ENCODE measurements at regions of chr3 and their contacts with region 1.

Region 1: DNA sequence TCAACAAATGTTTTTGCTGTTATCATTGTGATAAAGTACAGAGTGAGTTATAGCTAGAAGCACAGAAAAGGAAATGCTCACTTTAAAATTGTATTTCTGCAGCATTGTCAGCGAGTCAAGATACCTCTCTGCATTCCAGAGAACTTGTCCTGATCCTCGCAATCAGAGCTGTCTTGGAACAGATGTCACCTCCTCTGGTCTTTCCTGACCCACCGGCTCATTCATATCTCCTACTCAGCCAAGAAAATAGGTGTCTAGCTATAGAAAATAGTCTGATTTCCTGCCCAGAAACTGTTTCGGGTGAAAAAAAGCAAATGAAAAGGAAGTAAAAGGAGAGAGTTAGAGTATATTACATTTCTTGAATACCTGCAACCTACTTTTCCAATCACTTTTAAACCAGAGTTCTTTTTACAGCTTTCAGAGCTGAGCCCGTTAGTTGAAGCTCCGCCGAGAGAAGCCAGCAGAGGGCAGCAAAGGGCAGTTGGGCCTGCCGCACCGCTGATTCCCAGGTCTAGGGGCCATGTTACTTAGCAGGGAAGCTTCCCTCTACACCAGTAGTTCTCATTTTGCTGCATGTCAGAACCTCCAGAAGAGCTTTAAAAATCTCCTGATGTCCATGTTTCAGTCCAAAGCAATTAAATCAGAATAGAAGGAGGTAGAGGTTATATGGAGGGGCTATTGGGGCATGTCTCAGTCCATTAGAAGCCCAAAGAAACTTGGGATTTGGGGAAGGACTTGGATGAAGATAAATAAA is 185.7 kb upstream of the THRB start:
- DNase-seq: peak; percentile 10 to 44 (median 34)
- H3K4me3 ChIP-seq: no peak overlapping the region
- H3K4me3 Mint-ChIP-seq: no peak overlapping the region
- H3K27ac ChIP-seq: no peak overlapping the region
- H3K27ac Mint-ChIP-seq: peak overlapping the region in 1 of 7 donors; percentile 7
- H3K4me1 ChIP-seq: peaks cover 11% of the 10 kb centered on the region in 2 donors
- H3K4me1 Mint-ChIP-seq: peaks cover 20% of the 10 kb centered on the region
- H3K27me3 ChIP-seq: peaks cover 2 to 4% of the 10 kb centered on the region in 2 donors
- H3K27me3 Mint-ChIP-seq: peaks cover 6 to 24% (median 12%) of the 10 kb centered on the region in 3 donors
- CTCF ChIP-seq: peak; percentile 88

Region 2: DNA sequence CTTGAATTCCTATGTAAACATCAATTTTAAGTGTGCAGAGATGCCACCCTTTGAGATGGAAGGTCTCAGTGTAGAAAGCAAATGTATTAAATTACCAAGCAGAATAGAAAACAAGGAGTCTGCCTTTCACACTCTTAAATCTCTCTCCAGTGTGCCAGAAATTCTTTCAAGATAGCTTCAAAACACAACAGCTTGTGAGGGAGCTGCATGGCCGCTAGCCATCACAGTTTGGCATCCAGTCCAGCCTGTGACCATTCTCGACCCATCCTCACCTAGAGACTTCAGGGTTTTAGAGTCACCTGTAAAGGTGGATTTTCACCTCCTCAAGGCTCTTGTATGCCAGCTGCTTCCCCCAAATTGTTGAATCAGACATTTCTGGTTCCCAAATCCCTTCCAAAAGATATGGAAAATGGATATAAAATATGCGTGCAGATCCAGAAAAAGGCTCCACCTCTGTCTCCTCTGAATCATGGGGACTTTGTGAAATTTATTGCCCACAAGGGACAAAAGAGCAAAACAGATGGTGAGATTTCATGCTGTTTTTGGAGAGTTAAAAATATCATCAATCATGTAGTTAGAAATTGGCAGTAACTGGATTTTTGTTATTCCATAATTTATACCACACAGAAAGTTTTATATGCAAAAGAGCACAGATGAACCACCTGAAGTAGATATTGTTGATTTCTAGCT is 71.5 kb before region 1 on chr3:
- intact Hi-C with region 1: no loop called
- DNase-seq: no peak
- H3K4me3 ChIP-seq: no peak overlapping the region
- H3K4me3 Mint-ChIP-seq: no peak overlapping the region
- H3K27ac ChIP-seq: no peak overlapping the region
- H3K27ac Mint-ChIP-seq: no peak overlapping the region
- H3K4me1 ChIP-seq: no peaks in the 10 kb centered on the region
- H3K4me1 Mint-ChIP-seq: no peaks in the 10 kb centered on the region
- H3K27me3 ChIP-seq: no peaks in the 10 kb centered on the region
- H3K27me3 Mint-ChIP-seq: no peaks in the 10 kb centered on the region
- CTCF ChIP-seq: no peak

Region 3: GRCh38 chr3:25594007-25594502 is 913.7 kb after region 1 on chr3:
- intact Hi-C with region 1: loop called in 1 of 2 experiments (anchors 10 kb)
- DNase-seq: peak; percentile 13 to 21 (median 18)
- H3K4me3 ChIP-seq: no peak overlapping the region
- H3K4me3 Mint-ChIP-seq: no peak overlapping the region
- H3K27ac ChIP-seq: no peak overlapping the region
- H3K27ac Mint-ChIP-seq: no peak overlapping the region
- H3K4me1 ChIP-seq: no peaks in the 10 kb centered on the region
- H3K4me1 Mint-ChIP-seq: peaks cover 2% of the 10 kb centered on the region
- H3K27me3 ChIP-seq: no peaks in the 10 kb centered on the region
- H3K27me3 Mint-ChIP-seq: no peaks in the 10 kb centered on the region
- CTCF ChIP-seq: peak; percentile 91

Measured in CD14-positive monocyte (primary cell).